ENCODE measurements at regions of chr2 and their contacts with region 1.

Region 1: GRCh38 chr2:7427293-7428060 is 510.3 kb downstream of the RNF144A start:
- DNase-seq: no peak
- H3K4me3 ChIP-seq: no peak overlapping the region
- H3K27ac ChIP-seq: no peak overlapping the region
- H3K4me1 ChIP-seq: no peaks in the 10 kb centered on the region
- H3K27me3 ChIP-seq: no peaks in the 10 kb centered on the region
- CTCF ChIP-seq: peak; percentile 75

Region 2: GRCh38 chr2:7467782-7468447 is 40.4 kb after region 1 on chr2:
- intact Hi-C with region 1: no loop called
- DNase-seq: no peak
- H3K4me3 ChIP-seq: no peak overlapping the region
- H3K27ac ChIP-seq: no peak overlapping the region
- H3K4me1 ChIP-seq: no peaks in the 10 kb centered on the region
- H3K27me3 ChIP-seq: no peaks in the 10 kb centered on the region
- CTCF ChIP-seq: no peak

Region 3: DNA sequence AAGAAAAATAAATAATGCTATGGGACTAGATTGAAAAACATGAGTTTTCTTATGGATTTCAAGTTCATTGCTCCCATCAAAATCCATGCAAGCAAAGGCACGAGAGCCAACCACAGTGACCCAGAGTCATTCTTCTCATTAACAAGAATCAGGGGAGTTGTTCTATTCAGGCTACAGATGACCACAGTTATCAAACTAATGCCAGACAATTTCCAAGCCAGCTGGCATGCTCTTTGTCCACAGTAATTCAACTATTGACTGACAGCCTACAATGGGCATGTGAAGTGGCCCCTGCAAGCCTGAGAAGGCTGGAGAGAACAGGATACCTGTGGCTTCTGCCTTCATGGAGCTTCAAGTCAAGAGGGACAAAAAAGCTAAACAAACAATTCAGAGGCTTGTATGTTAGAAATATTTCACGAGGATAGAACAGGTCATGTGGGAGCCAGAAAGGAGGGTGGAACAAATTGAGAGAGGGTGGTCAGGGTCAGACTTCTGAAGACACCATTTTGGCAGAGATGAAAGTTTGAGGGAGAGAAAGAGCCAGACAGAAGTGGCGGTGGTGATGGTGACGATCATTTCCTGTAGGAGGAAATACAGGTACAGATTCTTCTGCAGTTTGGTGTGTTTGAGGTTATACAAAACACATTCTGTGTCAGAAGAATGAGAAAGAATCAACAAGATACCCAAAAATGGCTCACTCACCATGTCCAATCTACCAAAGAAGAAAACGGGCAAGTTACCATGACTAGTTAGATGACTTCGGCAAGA is 222.2 kb after region 1 on chr2:
- intact Hi-C with region 1: loop called (anchors 10 kb)
- DNase-seq: no peak
- H3K4me3 ChIP-seq: no peak overlapping the region
- H3K27ac ChIP-seq: no peak overlapping the region
- H3K4me1 ChIP-seq: no peaks in the 10 kb centered on the region
- H3K27me3 ChIP-seq: no peaks in the 10 kb centered on the region
- CTCF ChIP-seq: no peak

Region 4: DNA sequence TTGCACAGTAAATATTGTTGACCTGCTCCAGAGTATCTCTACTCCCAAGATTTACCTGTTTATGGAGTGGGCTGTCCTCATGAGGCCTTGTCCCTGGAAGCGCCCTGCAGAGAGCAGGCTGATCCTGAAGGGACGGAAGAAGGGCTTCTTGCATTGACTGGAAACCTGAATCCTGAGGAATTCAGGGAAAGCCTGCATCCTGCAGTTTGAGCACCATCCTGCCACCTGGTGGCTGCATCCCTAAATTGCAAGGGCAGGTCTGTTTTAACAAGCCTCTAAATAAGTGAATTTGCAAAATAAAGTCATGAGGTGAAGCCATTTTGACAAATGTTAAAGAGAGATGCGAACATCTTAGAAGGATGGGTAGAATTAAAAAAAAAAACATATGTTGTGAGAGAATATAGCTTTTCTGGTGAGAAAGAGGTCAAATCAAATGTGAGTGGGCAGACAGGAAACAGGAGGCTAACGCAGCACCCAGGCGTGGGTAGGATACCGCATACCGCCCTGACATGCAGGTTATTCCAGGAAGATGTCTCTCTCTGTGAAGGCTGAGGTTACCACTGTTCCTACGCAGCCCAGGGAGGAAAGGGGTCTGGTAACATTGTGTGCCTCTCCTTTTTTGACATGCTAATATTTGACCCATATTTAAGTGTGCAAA is 244.7 kb after region 1 on chr2:
- intact Hi-C with region 1: loop called (anchors 5 kb)
- DNase-seq: peak; percentile 76
- H3K4me3 ChIP-seq: no peak overlapping the region
- H3K27ac ChIP-seq: no peak overlapping the region
- H3K4me1 ChIP-seq: no peaks in the 10 kb centered on the region
- H3K27me3 ChIP-seq: no peaks in the 10 kb centered on the region
- CTCF ChIP-seq: peak; percentile 66

Region 5: GRCh38 chr2:8754106-8754776 is 1326.8 kb after region 1 on chr2:
- intact Hi-C with region 1: loop called (anchors 10 kb)
- DNase-seq: no peak
- H3K4me3 ChIP-seq: no peak overlapping the region
- H3K27ac ChIP-seq: no peak overlapping the region
- H3K4me1 ChIP-seq: no peaks in the 10 kb centered on the region
- H3K27me3 ChIP-seq: no peaks in the 10 kb centered on the region
- CTCF ChIP-seq: no peak

Measured in colonic mucosa (tissue), 4 donors.